ENCODE measurements at regions of chr1 and their contacts with region 1.

Region 1: GRCh38 chr1:160681067-160681890 is 30.3 kb downstream of the CD48 start:
- DNase-seq: peak; percentile 94
- H3K4me3 Mint-ChIP-seq: peak overlapping the region; percentile 17
- H3K27ac Mint-ChIP-seq: peak overlapping the region; percentile 96
- H3K4me1 Mint-ChIP-seq: peaks cover 87% of the 10 kb centered on the region
- H3K27me3 Mint-ChIP-seq: no peaks in the 10 kb centered on the region

Region 2: GRCh38 chr1:160534823-160535605 is 146.3 kb before region 1 on chr1:
- CTCF ChIA-PET with region 1: no interaction called
- POLR2A ChIA-PET with region 1: no interaction called
- intact Hi-C with region 1: no loop called
- DNase-seq: no peak
- H3K4me3 Mint-ChIP-seq: no peak overlapping the region
- H3K27ac Mint-ChIP-seq: no peak overlapping the region
- H3K4me1 Mint-ChIP-seq: peaks cover 22% of the 10 kb centered on the region
- H3K27me3 Mint-ChIP-seq: no peaks in the 10 kb centered on the region

Region 3: DNA sequence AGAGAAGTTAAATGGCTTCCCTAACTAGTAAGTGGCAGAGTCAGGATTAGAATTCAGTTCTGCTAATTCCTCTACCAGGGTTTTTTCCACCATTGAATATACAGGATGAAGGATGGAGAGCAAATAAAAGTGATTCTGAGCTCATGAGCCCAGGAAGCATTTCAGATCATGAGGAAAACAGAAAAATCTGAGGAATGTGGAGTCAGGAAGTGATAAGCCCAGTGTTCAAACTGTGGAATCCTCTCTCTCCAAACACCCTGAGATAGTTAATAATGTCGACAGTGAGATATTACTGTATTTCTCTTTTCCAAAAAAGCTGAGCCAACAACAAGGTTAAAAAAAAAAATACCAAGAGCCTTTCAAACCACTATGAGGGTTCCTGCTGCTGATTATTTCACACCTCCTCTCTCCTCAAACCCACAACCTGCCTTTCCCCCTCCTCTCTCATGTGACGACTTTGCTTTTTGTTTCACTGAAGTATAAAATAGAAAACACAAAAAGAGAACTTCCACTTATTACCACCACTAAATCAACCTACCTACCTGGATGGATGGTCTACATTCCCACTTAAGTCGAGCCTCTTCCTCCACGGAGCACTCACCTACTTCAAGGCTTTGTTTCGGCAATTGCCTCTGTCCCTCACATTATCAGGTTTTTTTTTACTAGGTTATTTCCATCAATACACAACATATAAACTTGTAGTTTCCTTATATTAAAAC is 43.3 kb before region 1 on chr1:
- CTCF ChIA-PET with region 1: interaction called, 12 read pairs
- POLR2A ChIA-PET with region 1: interaction called, 81 read pairs
- intact Hi-C with region 1: loop called (anchors 2 kb)
- DNase-seq: peak; percentile 64
- H3K4me3 Mint-ChIP-seq: peak overlapping the region; percentile 76
- H3K27ac Mint-ChIP-seq: peak overlapping the region; percentile 92
- H3K4me1 Mint-ChIP-seq: peaks cover 86% of the 10 kb centered on the region
- H3K27me3 Mint-ChIP-seq: no peaks in the 10 kb centered on the region

Region 4: DNA sequence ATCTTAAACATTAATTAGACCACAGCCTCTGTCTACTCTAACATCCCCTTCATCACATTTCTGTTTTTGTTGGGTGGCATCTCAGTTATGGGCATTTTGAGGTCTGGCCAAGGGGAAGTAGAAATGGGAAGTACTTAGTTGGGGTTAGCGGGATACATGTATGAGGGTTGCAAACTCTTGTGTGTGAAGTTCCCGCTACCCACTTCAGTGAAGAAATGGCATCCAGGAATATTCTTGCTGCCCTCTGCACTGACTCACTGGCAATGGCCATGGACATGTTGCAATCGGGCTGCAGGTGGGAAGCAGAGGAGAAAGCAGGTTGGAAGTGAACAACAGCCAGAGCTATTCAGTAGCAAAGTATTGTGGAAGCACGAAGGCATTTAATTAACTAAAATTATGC is 23.0 kb after region 1 on chr1:
- CTCF ChIA-PET with region 1: interaction called, 30 read pairs
- POLR2A ChIA-PET with region 1: interaction called, 14 read pairs
- intact Hi-C with region 1: loop called (anchors 1 kb)
- DNase-seq: no peak
- H3K4me3 Mint-ChIP-seq: peak overlapping the region; percentile 39
- H3K27ac Mint-ChIP-seq: peak overlapping the region; percentile 36
- H3K4me1 Mint-ChIP-seq: peaks cover 68% of the 10 kb centered on the region
- H3K27me3 Mint-ChIP-seq: no peaks in the 10 kb centered on the region

Region 5: DNA sequence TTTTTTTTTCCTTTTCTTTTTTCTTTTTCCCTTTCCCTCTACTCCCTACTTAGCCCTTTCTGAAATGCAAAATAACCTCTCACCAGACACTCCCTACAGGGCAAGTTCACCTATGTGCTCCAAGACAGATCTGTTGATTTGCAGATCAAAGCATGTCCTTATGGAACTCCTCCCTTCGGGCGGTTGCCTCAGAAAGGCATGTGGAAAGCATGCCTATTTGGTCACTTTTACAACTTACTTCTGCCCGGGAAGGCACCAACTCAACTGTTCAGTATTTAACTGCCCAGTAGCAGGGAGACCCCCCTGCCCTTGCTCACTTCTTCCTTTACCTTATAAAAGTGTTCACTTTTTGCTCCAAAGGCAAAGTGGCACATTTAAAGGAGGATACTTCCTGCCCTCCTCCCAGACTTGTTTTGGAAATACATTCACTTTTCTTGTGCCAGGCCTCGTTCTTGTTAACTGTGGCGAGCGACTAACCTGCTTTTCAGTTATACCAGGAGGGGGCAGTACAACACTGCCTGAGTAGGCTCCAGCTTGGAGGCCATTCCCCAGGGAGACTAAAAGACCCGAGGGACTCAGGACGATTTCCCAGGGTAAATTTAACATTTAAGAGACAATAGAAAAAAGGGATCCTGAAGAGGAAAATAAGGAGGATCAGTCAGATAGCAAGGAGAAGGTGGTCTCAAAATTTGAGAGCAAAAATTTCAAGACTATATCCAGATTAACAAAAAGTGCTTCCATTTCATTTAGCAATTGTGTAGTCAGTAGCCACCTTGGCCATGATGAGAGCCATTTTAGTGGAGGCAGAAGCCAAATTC is 45.4 kb after region 1 on chr1:
- CTCF ChIA-PET with region 1: interaction called, 69 read pairs
- POLR2A ChIA-PET with region 1: interaction called, 3 read pairs
- intact Hi-C with region 1: loop called (anchors 1 kb)
- DNase-seq: peak; percentile 72
- H3K4me3 Mint-ChIP-seq: no peak overlapping the region
- H3K27ac Mint-ChIP-seq: no peak overlapping the region
- H3K4me1 Mint-ChIP-seq: peaks cover 24% of the 10 kb centered on the region
- H3K27me3 Mint-ChIP-seq: no peaks in the 10 kb centered on the region

Region 6: DNA sequence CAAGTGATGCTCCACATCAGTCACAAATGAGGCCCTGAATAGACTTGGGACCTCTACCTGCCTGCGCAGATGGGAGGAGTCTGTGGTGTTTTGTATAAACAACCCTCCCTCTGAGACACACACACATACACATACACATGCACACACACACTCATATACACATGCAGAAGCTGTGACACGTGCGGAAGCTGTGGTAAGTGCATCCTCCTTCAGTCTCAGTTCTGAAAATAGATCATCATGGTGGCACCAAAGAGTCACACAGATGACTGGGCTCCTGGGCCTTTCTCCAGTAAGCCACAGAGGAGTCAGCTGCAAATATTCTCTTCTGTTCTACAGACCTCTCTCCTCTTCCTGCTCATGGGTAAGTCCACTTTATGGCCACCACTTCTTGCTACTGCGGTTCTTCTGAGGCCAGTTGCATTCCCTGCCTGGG is 114.7 kb after region 1 on chr1 and contains the start of gene LY9:
- CTCF ChIA-PET with region 1: interaction called, 12 read pairs
- POLR2A ChIA-PET with region 1: no interaction called
- intact Hi-C with region 1: no loop called
- DNase-seq: peak; percentile 90
- H3K4me3 Mint-ChIP-seq: peak within 1 kb of the TSS; percentile 77
- H3K27ac Mint-ChIP-seq: peak within 1 kb of the TSS; percentile 88
- H3K4me1 Mint-ChIP-seq: peaks cover 61% of the 10 kb centered on the region
- H3K27me3 Mint-ChIP-seq: no peaks in the 10 kb centered on the region
- total RNA-seq, gene LY9: 4.8 to 4.9 TPM

Region 7: DNA sequence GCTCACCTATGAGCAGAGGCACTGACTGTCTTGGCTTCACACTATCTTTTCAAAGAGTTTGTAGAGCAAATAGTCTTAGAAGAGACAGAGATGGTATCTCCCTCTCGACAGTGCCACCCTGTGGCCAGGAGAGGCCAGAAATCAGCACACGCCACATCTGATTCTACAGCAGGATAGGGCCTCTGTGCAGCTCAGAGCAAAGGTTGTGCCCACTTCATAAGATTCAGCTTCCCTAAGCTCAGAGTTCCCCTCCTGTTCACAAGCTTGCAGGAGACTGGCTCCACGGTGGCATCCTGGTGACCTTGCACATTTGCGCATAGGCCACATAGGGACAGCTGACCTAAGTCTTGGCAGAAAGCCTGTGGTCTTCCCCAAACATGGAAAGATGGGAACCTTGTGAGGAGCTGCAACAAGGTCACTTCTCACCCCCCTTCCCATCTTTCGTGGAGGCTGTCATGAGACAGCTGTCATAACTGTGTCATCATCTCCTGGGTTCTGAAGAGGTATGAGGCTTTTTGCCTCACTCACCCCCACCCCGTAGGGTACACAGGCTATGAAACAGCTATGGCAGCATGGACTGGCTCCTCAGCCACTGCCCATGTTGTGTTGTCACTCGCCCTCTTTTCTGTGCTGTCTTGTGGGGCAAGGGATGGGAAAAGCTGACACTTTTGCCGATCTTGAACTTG is 270.3 kb after region 1 on chr1:
- CTCF ChIA-PET with region 1: interaction called, 56 read pairs
- POLR2A ChIA-PET with region 1: no interaction called
- intact Hi-C with region 1: loop called (anchors 1 kb)
- DNase-seq: peak; percentile 81
- H3K4me3 Mint-ChIP-seq: no peak overlapping the region
- H3K27ac Mint-ChIP-seq: no peak overlapping the region
- H3K4me1 Mint-ChIP-seq: peaks cover 2% of the 10 kb centered on the region
- H3K27me3 Mint-ChIP-seq: no peaks in the 10 kb centered on the region

Region 8: DNA sequence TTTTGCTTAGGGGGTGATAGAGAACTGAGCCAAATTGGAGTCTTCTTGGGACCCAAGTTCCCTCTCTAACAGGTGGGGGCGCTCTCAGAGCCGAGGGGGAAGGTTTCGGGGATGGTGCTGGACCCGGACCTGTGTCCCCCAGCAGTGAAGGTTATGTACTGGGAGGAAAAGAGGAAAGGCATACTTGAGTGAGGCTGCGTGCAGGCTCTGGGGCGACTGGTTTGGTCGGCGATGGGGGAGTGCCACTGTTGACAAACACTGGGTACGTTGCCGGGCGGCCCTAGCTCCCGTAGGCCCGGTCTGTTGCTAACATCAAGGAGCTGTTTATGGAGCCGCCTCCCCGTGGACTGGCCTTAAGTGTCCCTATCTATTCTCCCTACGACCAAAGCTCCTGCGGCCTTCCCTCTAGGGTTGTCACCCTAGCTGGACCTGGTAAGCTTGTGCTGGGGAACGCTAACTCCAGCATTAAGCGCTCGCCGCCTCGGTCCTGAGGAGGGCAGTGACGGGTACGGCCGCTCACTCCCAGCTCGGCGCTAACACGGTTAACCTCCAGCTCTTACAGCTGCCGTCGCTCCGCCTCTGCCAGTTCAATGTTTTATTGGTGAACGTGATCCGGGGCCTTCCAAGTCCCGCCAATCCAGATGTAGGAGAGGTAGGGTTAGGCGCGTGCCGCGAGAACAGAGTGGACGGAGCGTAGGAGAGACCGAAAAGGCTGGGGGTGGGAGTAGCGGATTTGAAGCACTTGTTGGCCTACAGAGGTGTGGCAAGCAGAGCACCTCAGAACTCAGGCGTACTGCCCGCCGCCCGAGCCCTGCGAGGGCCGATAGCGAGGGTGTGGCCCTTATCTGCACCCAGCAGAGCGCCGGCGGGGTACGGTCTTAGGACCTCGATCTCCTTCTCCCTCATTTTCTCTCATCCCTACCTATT is 484.7 kb after region 1 on chr1 and contains the start of gene PPOX:
- CTCF ChIA-PET with region 1: no interaction called
- POLR2A ChIA-PET with region 1: no interaction called
- intact Hi-C with region 1: no loop called
- DNase-seq: peak; percentile 97
- H3K4me3 Mint-ChIP-seq: peak within 1 kb of the TSS; percentile 86
- H3K27ac Mint-ChIP-seq: peak within 1 kb of the TSS; percentile 93
- H3K4me1 Mint-ChIP-seq: peaks cover 48% of the 10 kb centered on the region
- H3K27me3 Mint-ChIP-seq: no peaks in the 10 kb centered on the region
- total RNA-seq, gene PPOX: 27.0 to 30.7 TPM

Measured in activated CD4-positive, alpha-beta memory T cell treated with anti-CD3 and anti-CD28 coated beads for 36 hours (primary cell).